Naive thymus-derived CD4-positive, alpha-beta T cell (primary cell): ENCODE measurements at regions of chr12 and their contacts with region 1.

Region 1: GRCh38 chr12:42237052-42237852 is 796 bp downstream of the YAF2 start:
- DNase-seq: peak; percentile 60 to 75 (median 71)
- ATAC-seq: peak; percentile 82
- H3K4me3 ChIP-seq: peak overlapping the region; percentile 58
- H3K4me3 Mint-ChIP-seq: peak overlapping the region; percentile 90 to 97 (median 92)
- H3K27ac ChIP-seq: peak overlapping the region; percentile 92
- H3K27ac Mint-ChIP-seq: peak overlapping the region; percentile 82 to 94 (median 89)
- H3K4me1 ChIP-seq: peaks cover 18 to 23% of the 10 kb centered on the region in 2 donors
- H3K4me1 Mint-ChIP-seq: peaks cover 31 to 58% (median 47%) of the 10 kb centered on the region in 7 donors
- H3K27me3 ChIP-seq: no peaks in the 10 kb centered on the region
- H3K27me3 Mint-ChIP-seq: no peaks in the 10 kb centered on the region

Region 2: GRCh38 chr12:42144408-42145196 is 92.7 kb before region 1 on chr12 and contains the start of gene GXYLT1:
- CTCF ChIA-PET with region 1: no interaction called
- POLR2A ChIA-PET with region 1: no interaction called
- intact Hi-C with region 1: loop called (anchors 1 to 2 kb)
- DNase-seq: peak; percentile 60 to 89 (median 73)
- ATAC-seq: peak; percentile 94
- H3K4me3 ChIP-seq: peak within 1 kb of the TSS; percentile 54
- H3K4me3 Mint-ChIP-seq: peak within 1 kb of the TSS; percentile 89 to 98 (median 94)
- H3K27ac ChIP-seq: peak within 1 kb of the TSS; percentile 62
- H3K27ac Mint-ChIP-seq: peak within 1 kb of the TSS; percentile 80 to 95 (median 89)
- H3K4me1 ChIP-seq: peaks cover 7 to 11% of the 10 kb centered on the region in 2 donors
- H3K4me1 Mint-ChIP-seq: peaks cover 32 to 54% (median 45%) of the 10 kb centered on the region in 7 donors
- H3K27me3 ChIP-seq: no peaks in the 10 kb centered on the region
- H3K27me3 Mint-ChIP-seq: peaks cover 0 to 11% (median 0%) of the 10 kb centered on the region in 5 donors
- total RNA-seq, gene GXYLT1: 6.7 to 9.7 (median 7.2) TPM

Region 3: GRCh38 chr12:42325653-42326474 is 88.6 kb after region 1 on chr12 and contains the starts of genes PPHLN1 and ZCRB1:
- CTCF ChIA-PET with region 1: interaction called, 3 read pairs
- POLR2A ChIA-PET with region 1: interaction called, 15 read pairs
- intact Hi-C with region 1: loop called (anchors 1 kb)
- DNase-seq: peak; percentile 61 to 79 (median 74)
- ATAC-seq: peak; percentile 94
- H3K4me3 ChIP-seq: peak within 1 kb of the TSS; percentile 69
- H3K4me3 Mint-ChIP-seq: peak within 1 kb of the TSS; percentile 92 to 100 (median 98)
- H3K27ac ChIP-seq: peak within 1 kb of the TSS; percentile 80
- H3K27ac Mint-ChIP-seq: peak within 1 kb of the TSS; percentile 93 to 99 (median 97)
- H3K4me1 ChIP-seq: peaks cover 15 to 20% of the 10 kb centered on the region in 2 donors
- H3K4me1 Mint-ChIP-seq: peaks cover 33 to 57% (median 50%) of the 10 kb centered on the region in 7 donors
- H3K27me3 ChIP-seq: no peaks in the 10 kb centered on the region
- H3K27me3 Mint-ChIP-seq: no peaks in the 10 kb centered on the region
- total RNA-seq, gene PPHLN1: 89.1 to 97.6 (median 90.2) TPM
- total RNA-seq, gene ZCRB1: 20.3 to 47.5 (median 23.8) TPM

Region 4: DNA sequence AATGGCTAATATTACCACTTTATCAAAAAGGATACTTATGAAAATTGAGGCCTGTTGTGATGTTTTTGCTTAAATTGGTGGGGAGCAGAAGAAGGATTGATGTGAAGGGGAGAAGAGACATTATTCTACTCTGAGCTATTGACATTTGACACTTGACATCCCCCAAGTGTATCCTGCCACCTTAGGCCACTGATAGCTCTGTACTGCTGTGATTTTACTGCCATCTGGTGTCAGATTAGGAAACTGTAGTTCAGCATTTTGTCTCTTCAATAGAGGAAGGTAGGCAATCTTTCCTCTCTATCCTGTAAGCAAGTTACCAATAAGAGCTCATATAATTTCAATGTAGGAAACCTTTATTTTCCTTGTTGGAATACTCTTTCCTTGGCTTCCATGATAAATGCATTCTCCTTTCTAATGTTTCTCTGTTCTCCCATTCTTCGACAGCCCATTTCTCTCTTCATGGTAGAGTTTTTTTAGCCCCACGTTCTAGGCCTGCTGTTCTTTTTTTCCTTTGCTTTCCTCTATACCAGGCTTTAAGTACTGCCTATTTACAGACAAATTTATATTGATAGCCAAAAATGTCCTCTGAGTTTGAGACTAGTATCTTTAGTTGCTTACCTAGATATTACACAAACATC is 135.0 kb after region 1 on chr12:
- CTCF ChIA-PET with region 1: no interaction called
- POLR2A ChIA-PET with region 1: no interaction called
- intact Hi-C with region 1: loop called in 1 of 2 experiments (anchors 5 kb)
- DNase-seq: peak in 7 of 9 donors; percentile 26 to 61 (median 49)
- ATAC-seq: peak; percentile 93
- H3K4me3 ChIP-seq: no peak overlapping the region
- H3K4me3 Mint-ChIP-seq: no peak overlapping the region
- H3K27ac ChIP-seq: no peak overlapping the region
- H3K27ac Mint-ChIP-seq: no peak overlapping the region
- H3K4me1 ChIP-seq: no peaks in the 10 kb centered on the region
- H3K4me1 Mint-ChIP-seq: peaks cover 4 to 32% (median 15%) of the 10 kb centered on the region in 7 donors
- H3K27me3 ChIP-seq: no peaks in the 10 kb centered on the region
- H3K27me3 Mint-ChIP-seq: no peaks in the 10 kb centered on the region

Region 5: GRCh38 chr12:42458575-42458974 is 221.3 kb after region 1 on chr12:
- CTCF ChIA-PET with region 1: no interaction called
- POLR2A ChIA-PET with region 1: no interaction called
- intact Hi-C with region 1: no loop called
- DNase-seq: no peak
- ATAC-seq: no peak
- H3K4me3 ChIP-seq: no peak overlapping the region
- H3K4me3 Mint-ChIP-seq: no peak overlapping the region
- H3K27ac ChIP-seq: no peak overlapping the region
- H3K27ac Mint-ChIP-seq: no peak overlapping the region
- H3K4me1 ChIP-seq: no peaks in the 10 kb centered on the region
- H3K4me1 Mint-ChIP-seq: no peaks in the 10 kb centered on the region
- H3K27me3 ChIP-seq: no peaks in the 10 kb centered on the region
- H3K27me3 Mint-ChIP-seq: peaks cover 0 to 9% (median 5%) of the 10 kb centered on the region in 5 donors